AG04450 (cell line): ENCODE measurements at regions of chr1 and their contacts with region 1.

Region 1: GRCh38 chr1:103461161-103462105 is 64.1 kb upstream of the RNPC3 start:
- DNase-seq: no peak
- H3K4me3 ChIP-seq: no peak overlapping the region
- H3K27ac ChIP-seq: no peak overlapping the region
- H3K27me3 ChIP-seq: no peaks in the 10 kb centered on the region
- CTCF ChIP-seq: peak; percentile 59

Region 2: GRCh38 chr1:102970498-102971078 is 490.8 kb before region 1 on chr1:
- CTCF ChIA-PET with region 1: interaction called, 14 read pairs
- POLR2A ChIA-PET with region 1: no interaction called
- DNase-seq: peak; percentile 39
- H3K4me3 ChIP-seq: no peak overlapping the region
- H3K27ac ChIP-seq: no peak overlapping the region
- H3K27me3 ChIP-seq: no peaks in the 10 kb centered on the region
- CTCF ChIP-seq: peak; percentile 78

Region 3: GRCh38 chr1:103106426-103107341 is 354.7 kb before region 1 on chr1:
- CTCF ChIA-PET with region 1: interaction called, 100 read pairs
- POLR2A ChIA-PET with region 1: no interaction called
- DNase-seq: no peak
- H3K4me3 ChIP-seq: peak overlapping the region; percentile 61
- H3K27ac ChIP-seq: no peak overlapping the region
- H3K27me3 ChIP-seq: no peaks in the 10 kb centered on the region
- CTCF ChIP-seq: peak; percentile 58

Region 4: DNA sequence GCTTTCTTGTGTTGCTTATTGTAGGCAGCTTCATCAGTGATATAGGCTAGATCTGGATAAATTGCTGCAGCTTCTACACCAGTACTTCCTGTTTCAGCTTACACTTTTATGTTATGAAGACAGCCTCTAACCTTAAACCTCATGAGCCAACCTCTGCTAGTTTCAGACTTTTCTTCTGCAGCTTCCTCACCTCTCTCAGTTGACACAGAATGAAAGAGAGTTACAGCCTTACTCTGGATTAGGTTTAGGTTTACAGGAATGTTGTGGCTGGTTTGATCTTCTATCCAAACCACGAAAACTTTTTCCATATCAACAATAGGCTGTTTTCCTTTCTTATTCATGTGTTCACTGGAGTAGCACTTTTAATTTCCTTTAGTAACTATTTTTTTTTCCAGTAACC is 12.9 kb before region 1 on chr1:
- CTCF ChIA-PET with region 1: interaction called, 17 read pairs
- POLR2A ChIA-PET with region 1: no interaction called
- DNase-seq: no peak
- H3K4me3 ChIP-seq: no peak overlapping the region
- H3K27ac ChIP-seq: no peak overlapping the region
- H3K27me3 ChIP-seq: no peaks in the 10 kb centered on the region
- CTCF ChIP-seq: no peak

Region 5: DNA sequence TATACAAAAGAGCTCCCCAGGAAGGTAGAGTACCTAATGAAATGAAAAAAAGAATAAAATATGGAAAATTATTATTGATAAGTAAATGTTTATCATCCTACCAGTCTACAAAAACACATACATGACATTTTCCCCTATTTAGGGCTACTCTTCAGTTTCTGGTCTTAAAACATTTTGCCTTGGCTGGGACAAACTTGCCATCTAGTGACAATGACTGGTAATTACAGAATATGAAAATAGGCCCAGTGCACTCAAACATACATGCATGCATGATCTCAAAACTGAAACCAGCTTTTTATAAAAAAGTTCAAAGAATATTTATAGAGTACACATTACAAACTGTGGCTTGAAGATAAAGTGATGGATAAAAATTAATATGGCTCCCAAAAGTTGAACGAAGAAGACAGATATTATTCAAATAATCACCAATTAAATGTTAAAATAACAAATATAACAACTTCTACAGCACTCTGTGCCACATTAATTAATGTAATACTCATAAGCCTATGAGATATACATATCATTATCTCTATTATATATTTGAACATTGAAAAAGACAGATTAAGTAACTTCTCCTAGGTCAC is 53.6 kb after region 1 on chr1:
- CTCF ChIA-PET with region 1: interaction called, 12 read pairs
- POLR2A ChIA-PET with region 1: no interaction called
- DNase-seq: no peak
- H3K4me3 ChIP-seq: no peak overlapping the region
- H3K27ac ChIP-seq: no peak overlapping the region
- H3K27me3 ChIP-seq: no peaks in the 10 kb centered on the region
- CTCF ChIP-seq: peak; percentile 83

Region 6: DNA sequence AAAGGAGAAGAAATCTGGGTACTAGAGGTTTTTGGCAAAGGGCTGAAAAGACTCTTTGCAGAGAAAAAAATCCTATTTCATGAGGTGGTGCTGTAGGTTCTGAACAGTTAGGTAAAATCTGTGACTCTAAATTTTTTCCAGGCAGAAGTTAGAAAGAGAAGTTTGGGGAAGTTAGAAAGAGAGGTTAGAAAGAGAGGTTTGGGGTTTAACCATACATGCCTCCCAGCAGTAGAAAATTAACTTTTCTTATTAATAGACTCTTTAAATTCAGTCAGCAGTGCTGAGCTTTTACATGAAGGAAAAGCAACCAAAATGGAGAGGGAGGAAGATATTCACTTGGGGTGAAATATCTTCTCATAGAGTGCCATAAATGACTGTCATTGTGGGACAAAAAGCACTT is 300.5 kb after region 1 on chr1:
- CTCF ChIA-PET with region 1: no interaction called
- POLR2A ChIA-PET with region 1: no interaction called
- DNase-seq: no peak
- H3K4me3 ChIP-seq: no peak overlapping the region
- H3K27ac ChIP-seq: no peak overlapping the region
- H3K27me3 ChIP-seq: no peaks in the 10 kb centered on the region
- CTCF ChIP-seq: no peak